Naive thymus-derived CD4-positive, alpha-beta T cell (primary cell): ENCODE measurements at regions of chr4 and their contacts with region 1.

Region 1: DNA sequence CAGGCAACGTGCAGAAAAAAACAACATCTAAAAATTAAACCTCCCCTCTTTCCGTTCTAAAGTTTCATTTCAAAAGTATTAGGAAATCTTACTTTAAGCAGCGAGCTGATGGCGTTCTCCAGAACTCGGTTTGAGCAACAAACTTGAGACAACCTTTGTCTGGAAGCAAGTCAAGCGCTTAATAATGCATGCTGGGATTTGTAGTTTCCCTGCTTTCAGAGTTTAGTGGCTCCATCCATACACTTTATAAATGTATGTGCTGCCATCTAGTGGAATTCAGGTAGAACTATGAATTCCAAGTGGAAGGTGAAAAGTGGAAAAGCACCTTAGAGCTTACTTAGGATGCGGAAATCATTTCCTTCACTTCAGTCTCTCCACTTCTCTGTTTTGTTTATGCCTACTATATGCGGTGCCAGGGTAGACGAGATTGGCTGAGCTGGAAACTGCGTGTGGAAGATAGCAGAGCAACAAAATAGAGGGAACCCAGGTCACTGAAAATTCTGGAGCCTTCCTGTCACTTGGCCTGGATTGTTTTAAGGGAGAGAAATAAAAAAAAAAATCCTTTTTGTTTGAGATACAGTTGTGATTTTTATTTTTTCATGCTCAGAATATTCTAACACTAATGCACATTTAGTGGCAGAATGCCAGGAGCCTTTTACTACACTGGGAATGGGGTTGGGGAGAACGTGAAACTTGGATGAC is at the start of gene BDH2:
- DNase-seq: peak in 7 of 9 donors; percentile 72 to 86 (median 83)
- ATAC-seq: peak; percentile 100
- H3K4me3 ChIP-seq: peak within 1 kb of the TSS; percentile 62
- H3K4me3 Mint-ChIP-seq: peak within 1 kb of the TSS; percentile 88 to 100 (median 94)
- H3K27ac ChIP-seq: peak within 1 kb of the TSS; percentile 69
- H3K27ac Mint-ChIP-seq: peak within 1 kb of the TSS; percentile 81 to 95 (median 92)
- H3K4me1 ChIP-seq: peaks cover 4 to 11% of the 10 kb centered on the region in 2 donors
- H3K4me1 Mint-ChIP-seq: peaks cover 22 to 45% (median 34%) of the 10 kb centered on the region in 7 donors
- H3K27me3 ChIP-seq: no peaks in the 10 kb centered on the region
- H3K27me3 Mint-ChIP-seq: no peaks in the 10 kb centered on the region
- total RNA-seq, gene BDH2: 8.4 to 21.9 (median 18.5) TPM

Region 2: GRCh38 chr4:102255454-102255853 is 844.4 kb before region 1 on chr4:
- CTCF ChIA-PET with region 1: no interaction called
- POLR2A ChIA-PET with region 1: no interaction called
- intact Hi-C with region 1: loop called (anchors 10 kb)
- DNase-seq: no peak
- ATAC-seq: no peak
- H3K4me3 ChIP-seq: no peak overlapping the region
- H3K4me3 Mint-ChIP-seq: no peak overlapping the region
- H3K27ac ChIP-seq: no peak overlapping the region
- H3K27ac Mint-ChIP-seq: no peak overlapping the region
- H3K4me1 ChIP-seq: no peaks in the 10 kb centered on the region
- H3K4me1 Mint-ChIP-seq: peaks cover 0 to 9% (median 0%) of the 10 kb centered on the region in 7 donors
- H3K27me3 ChIP-seq: no peaks in the 10 kb centered on the region
- H3K27me3 Mint-ChIP-seq: no peaks in the 10 kb centered on the region

Region 3: DNA sequence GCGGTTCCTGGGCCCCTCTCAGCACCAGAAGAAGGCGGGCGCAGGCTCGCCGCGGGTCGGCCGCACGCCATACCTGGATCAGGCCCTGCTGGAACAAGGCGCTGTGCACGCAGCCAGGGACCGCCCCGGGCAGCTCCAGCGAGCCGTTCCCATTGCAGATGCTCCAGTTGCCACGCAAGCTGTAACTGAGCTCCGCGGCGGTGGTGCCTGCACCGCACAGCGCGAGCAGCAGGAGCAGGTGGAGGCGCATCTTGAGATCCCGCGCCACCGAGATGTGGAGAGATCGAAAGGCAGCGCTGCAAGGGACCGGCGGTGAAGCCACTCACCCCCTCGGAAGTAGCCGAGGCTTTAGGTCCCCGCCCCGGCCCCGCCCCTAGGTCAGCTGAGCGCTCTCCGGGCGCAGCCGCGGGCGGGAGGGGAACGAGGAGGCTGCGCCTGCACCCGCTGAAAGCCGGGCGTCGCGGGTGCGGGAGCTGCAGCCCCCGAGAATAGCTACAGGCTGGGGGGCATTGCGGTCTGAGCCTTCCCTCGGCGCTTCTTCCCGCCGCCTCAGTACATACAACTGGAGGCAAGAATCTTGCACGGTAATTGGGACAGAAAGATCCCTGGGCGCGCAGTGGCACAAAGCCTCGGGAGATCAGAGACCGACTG is 339.1 kb before region 1 on chr4 and contains the start of gene MANBA:
- CTCF ChIA-PET with region 1: interaction called, 3 read pairs
- POLR2A ChIA-PET with region 1: no interaction called
- intact Hi-C with region 1: loop called in 1 of 2 experiments (anchors 1 kb)
- DNase-seq: peak; percentile 62 to 81 (median 73)
- ATAC-seq: peak; percentile 91
- H3K4me3 ChIP-seq: peak within 1 kb of the TSS; percentile 62
- H3K4me3 Mint-ChIP-seq: peak within 1 kb of the TSS; percentile 86 to 99 (median 98)
- H3K27ac ChIP-seq: peak within 1 kb of the TSS; percentile 72
- H3K27ac Mint-ChIP-seq: peak within 1 kb of the TSS; percentile 56 to 92 (median 84)
- H3K4me1 ChIP-seq: peaks cover 4 to 16% of the 10 kb centered on the region in 2 donors
- H3K4me1 Mint-ChIP-seq: peaks cover 35 to 50% (median 42%) of the 10 kb centered on the region in 7 donors
- H3K27me3 ChIP-seq: no peaks in the 10 kb centered on the region
- H3K27me3 Mint-ChIP-seq: peaks cover 0 to 13% (median 0%) of the 10 kb centered on the region in 5 donors
- total RNA-seq, gene MANBA: 15.7 to 56.4 (median 29.7) TPM

Region 4: DNA sequence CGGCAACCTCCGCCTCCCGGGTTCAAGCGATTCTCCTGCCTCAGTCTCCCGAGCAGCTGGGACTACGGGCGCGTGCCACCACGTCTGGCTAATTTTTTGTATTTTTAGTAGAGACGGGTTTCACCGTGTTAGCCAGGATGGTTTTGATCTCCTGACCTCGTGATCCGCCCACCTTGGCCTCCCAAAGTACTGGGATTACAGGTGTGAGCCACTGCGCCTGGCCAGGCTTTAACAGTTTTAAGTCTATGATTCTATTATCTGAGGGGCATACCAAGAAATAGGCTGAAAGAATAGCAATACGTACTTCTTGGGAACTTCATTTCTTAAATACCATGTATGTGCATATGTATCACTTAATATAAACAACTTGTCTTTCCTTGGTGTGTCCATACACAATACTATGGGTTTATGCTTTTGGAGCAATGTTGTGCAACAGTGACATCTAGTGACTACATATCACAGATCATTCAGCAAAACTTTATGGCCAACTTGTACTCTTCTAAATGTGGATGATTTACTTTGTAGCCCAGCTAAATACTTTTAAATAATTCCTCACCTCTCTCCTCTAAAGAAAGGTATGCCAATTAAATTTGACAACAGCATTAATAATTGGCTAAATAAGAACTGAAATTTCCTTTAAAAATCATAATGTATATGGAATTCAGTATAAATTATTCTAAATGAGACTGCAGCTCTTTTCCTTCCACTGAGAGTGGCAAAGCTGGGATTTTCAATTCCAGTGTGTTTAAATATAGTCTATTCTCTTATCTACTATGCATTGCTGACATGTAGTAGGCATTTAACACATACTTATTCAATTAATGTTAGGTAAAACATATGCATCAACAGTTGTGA is 90.7 kb before region 1 on chr4:
- CTCF ChIA-PET with region 1: interaction called, 4 read pairs
- POLR2A ChIA-PET with region 1: no interaction called
- intact Hi-C with region 1: loop called in 1 of 2 experiments (anchors 1 kb)
- DNase-seq: peak in 7 of 9 donors; percentile 39 to 67 (median 56)
- ATAC-seq: peak; percentile 93
- H3K4me3 ChIP-seq: no peak overlapping the region
- H3K4me3 Mint-ChIP-seq: no peak overlapping the region
- H3K27ac ChIP-seq: no peak overlapping the region
- H3K27ac Mint-ChIP-seq: no peak overlapping the region
- H3K4me1 ChIP-seq: no peaks in the 10 kb centered on the region
- H3K4me1 Mint-ChIP-seq: peaks cover 0 to 3% (median 0%) of the 10 kb centered on the region in 7 donors
- H3K27me3 ChIP-seq: no peaks in the 10 kb centered on the region
- H3K27me3 Mint-ChIP-seq: peaks cover 0 to 14% (median 0%) of the 10 kb centered on the region in 5 donors

Region 5: DNA sequence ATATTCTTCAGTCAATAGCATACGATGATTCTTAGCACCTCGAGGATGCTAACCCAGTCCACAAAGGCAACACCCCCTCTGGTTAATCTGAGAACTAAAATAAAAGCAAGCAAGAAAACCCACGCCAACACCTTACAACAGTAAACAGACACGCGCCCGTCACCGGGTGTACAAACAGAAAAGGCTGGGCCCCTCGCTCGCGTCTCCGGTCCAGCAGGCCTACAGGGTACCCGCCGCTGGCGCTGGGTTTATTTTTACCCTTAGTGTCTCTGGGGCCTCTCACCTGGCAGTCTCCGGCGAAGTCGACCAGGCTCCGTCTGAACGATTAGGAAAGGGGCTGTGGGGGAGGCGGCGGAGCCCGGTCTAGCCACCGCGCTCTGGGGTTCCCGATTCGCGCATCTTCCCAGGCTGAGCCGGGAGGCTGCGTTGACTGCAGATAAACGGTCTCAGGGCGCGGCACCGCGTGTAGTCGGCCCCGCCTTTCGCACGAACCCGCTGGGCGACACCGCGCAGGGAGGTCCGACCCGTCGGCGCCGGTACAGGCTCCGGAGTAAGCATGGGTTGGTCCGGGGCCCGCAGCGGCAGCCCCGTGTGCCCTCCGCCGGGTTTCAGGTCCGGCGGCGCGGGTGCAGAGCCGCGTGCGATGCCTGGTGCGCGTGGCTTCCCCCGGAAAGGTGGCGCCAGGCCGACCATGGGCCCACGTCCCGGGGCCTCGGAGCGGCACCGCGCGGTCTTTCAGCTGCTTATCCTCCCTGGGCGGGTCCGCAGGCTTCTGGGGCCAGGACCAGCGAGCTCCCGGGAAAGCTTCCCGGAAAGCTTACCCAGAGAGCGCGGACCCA is 23.7 kb before region 1 on chr4:
- CTCF ChIA-PET with region 1: no interaction called
- POLR2A ChIA-PET with region 1: interaction called, 12 read pairs
- intact Hi-C with region 1: loop called (anchors 1 kb)
- DNase-seq: peak; percentile 53 to 75 (median 68)
- ATAC-seq: peak; percentile 83
- H3K4me3 ChIP-seq: peak overlapping the region; percentile 74
- H3K4me3 Mint-ChIP-seq: peak overlapping the region; percentile 77 to 97 (median 95)
- H3K27ac ChIP-seq: peak overlapping the region; percentile 87
- H3K27ac Mint-ChIP-seq: peak overlapping the region; percentile 86 to 99 (median 97)
- H3K4me1 ChIP-seq: peaks cover 10 to 17% of the 10 kb centered on the region in 2 donors
- H3K4me1 Mint-ChIP-seq: peaks cover 23 to 54% (median 47%) of the 10 kb centered on the region in 7 donors
- H3K27me3 ChIP-seq: no peaks in the 10 kb centered on the region
- H3K27me3 Mint-ChIP-seq: no peaks in the 10 kb centered on the region